Endothelial cell of umbilical vein (primary cell): ENCODE measurements at regions of chr17 and their contacts with region 1.

Region 1: GRCh38 chr17:44324571-44325275 is at the start of gene SLC25A39:
- DNase-seq: peak; percentile 92
- H3K4me3 ChIP-seq: peak within 1 kb of the TSS; percentile 34 to 79 (median 52)
- H3K27ac ChIP-seq: peak within 1 kb of the TSS; percentile 61
- H3K4me1 ChIP-seq: peaks cover 9% of the 10 kb centered on the region
- H3K27me3 ChIP-seq: no peaks in the 10 kb centered on the region
- CTCF ChIP-seq: no peak
- POLR2A ChIP-seq: peak; percentile 84
- total RNA-seq, gene SLC25A39: 88.5 and 97.9 TPM in 2 replicates

Region 2: GRCh38 chr17:44218344-44219107 is 106.2 kb before region 1 on chr17:
- CTCF ChIA-PET with region 1: interaction called, 68 read pairs
- POLR2A ChIA-PET with region 1: interaction called, 5 read pairs
- dilution Hi-C with region 1: no loop called
- intact Hi-C with region 1: loop called (anchors 1 kb)
- DNase-seq: peak; percentile 88
- H3K4me3 ChIP-seq: peak overlapping the region; percentile 9 to 68 (median 52)
- H3K27ac ChIP-seq: peak overlapping the region; percentile 71
- H3K4me1 ChIP-seq: peaks cover 34% of the 10 kb centered on the region
- H3K27me3 ChIP-seq: no peaks in the 10 kb centered on the region
- CTCF ChIP-seq: peak; percentile 53 to 72
- POLR2A ChIP-seq: no peak

Region 3: GRCh38 chr17:44279666-44280391 is 44.9 kb before region 1 on chr17:
- CTCF ChIA-PET with region 1: no interaction called
- POLR2A ChIA-PET with region 1: no interaction called
- dilution Hi-C with region 1: no loop called
- intact Hi-C with region 1: loop called (anchors 2 kb)
- DNase-seq: peak; percentile 89
- H3K4me3 ChIP-seq: no peak overlapping the region
- H3K27ac ChIP-seq: peak overlapping the region; percentile 69
- H3K4me1 ChIP-seq: peaks cover 15% of the 10 kb centered on the region
- H3K27me3 ChIP-seq: no peaks in the 10 kb centered on the region
- CTCF ChIP-seq: no peak
- POLR2A ChIP-seq: peak; percentile 17

Region 4: DNA sequence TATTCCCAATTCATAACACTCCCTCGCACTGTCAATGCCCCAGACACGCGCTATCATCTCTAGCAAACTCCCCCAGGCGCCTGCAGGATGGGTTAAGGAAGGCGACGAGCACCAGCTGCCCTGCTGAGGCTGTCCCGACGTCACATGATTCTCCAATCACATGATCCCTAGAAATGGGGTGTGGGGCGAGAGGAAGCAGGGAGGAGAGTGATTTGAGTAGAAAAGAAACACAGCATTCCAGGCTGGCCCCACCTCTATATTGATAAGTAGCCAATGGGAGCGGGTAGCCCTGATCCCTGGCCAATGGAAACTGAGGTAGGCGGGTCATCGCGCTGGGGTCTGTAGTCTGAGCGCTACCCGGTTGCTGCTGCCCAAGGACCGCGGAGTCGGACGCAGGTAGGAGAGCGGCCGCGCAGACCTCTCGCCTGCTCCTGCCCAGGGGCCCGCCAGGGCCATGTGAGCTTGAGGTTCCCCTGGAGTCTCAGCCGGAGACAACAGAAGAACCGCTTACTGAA is 20.3 kb after region 1 on chr17 and contains the start of gene GRN:
- CTCF ChIA-PET with region 1: interaction called, 26 read pairs
- POLR2A ChIA-PET with region 1: no interaction called
- dilution Hi-C with region 1: no loop called
- intact Hi-C with region 1: loop called (anchors 1 kb)
- DNase-seq: peak; percentile 99
- H3K4me3 ChIP-seq: peak within 1 kb of the TSS; percentile 31 to 70 (median 62)
- H3K27ac ChIP-seq: peak within 1 kb of the TSS; percentile 4
- H3K4me1 ChIP-seq: no peaks in the 10 kb centered on the region
- H3K27me3 ChIP-seq: peaks cover 0 to 2% of the 10 kb centered on the region in 2 experiments
- CTCF ChIP-seq: no peak
- POLR2A ChIP-seq: peak; percentile 96
- total RNA-seq, gene GRN: 343 and 346 TPM in 2 replicates